ENCODE measurements at regions of chr3 and their contacts with region 1.

Region 1: DNA sequence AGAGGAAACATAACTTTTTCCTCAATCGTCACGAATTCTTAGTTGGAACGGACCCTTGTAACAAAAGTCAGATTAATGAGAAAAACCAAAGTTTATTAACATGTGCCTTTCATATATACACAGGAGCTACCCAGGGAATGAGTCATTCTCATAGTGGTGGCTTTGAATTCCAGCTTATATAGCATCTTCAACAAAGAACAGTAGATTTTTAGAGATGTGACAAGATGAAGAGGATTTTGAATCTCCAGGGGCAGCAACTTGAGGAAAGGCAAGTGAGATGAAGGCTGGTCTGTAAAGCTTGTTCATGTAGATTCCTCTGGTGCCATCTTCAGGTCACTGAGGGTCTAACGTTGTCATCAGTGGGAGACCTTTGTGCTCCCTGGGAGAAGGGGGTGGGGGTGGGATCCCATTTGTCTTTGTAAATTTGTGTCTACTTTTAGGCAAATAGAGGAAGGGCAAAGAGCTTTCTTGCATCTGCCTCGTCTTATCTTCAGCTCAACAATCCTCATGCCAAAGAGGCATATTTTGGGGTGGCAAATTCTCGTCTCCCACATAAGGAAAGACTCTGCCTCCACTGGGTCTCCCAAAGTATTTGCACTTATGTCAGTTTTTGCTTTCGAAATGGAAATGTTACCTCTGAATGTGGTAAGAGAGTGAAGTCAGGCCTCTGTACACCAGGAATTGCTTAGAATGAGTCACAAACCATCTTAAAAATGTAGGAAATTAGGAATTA is 29.5 kb downstream of the CLEC3B start:
- DNase-seq: no peak
- H3K4me3 ChIP-seq: no peak overlapping the region
- H3K27ac ChIP-seq: no peak overlapping the region
- H3K4me1 ChIP-seq: peaks cover under 1 to 6% (median 2%) of the 10 kb centered on the region in 4 experiments; a peak in 5 of 7 replicates
- H3K27me3 ChIP-seq: peaks cover 10 to 40% (median 35%) of the 10 kb centered on the region in 4 experiments
- CTCF ChIP-seq: peak; percentile 51 to 60 (median 58)
- EP300 ChIP-seq: no peak
- POLR2A ChIP-seq: no peak
- RAD21 ChIP-seq: peak; percentile 59 to 72

Region 2: DNA sequence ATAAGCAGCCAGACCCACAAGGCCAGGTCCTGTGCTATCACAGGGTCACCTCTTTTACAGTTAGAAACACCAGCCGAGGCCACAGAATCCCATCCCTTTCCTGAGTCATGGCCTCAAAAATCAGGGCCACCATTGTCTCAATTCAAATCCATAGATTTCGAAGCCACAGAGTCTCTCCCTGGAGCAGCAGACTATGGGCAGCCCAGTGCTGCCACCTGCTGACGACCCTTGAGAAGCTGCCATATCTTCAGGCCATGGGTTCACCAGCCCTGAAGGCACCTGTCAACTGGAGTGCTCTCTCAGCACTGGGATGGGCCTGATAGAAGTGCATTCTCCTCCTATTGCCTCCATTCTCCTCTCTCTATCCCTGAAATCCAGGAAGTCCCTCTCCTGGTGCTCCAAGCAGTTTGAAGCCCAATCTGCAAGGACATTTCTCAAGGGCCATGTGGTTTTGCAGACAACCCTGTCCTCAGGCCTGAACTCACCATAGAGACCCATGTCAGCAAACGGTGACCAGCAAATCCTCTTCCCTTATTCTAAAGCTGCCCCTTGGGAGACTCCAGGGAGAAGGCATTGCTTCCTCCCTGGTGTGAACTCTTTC is 141.6 kb before region 1 on chr3:
- CTCF ChIA-PET with region 1: no interaction called
- POLR2A ChIA-PET with region 1: no interaction called
- DNase-seq: peak; percentile 58 to 85
- H3K4me3 ChIP-seq: no peak overlapping the region
- H3K27ac ChIP-seq: no peak overlapping the region
- H3K4me1 ChIP-seq: peaks cover 0 to 2% (median 0%) of the 10 kb centered on the region in 4 experiments; a peak in 1 of 7 replicates
- H3K27me3 ChIP-seq: no peaks in the 10 kb centered on the region
- CTCF ChIP-seq: peak; percentile 77 to 96 (median 84)
- EP300 ChIP-seq: no peak
- POLR2A ChIP-seq: no peak
- RAD21 ChIP-seq: peak; percentile 84 to 85

Region 3: GRCh38 chr3:44966750-44967278 is 88.8 kb before region 1 on chr3:
- CTCF ChIA-PET with region 1: no interaction called
- POLR2A ChIA-PET with region 1: no interaction called
- DNase-seq: no peak
- H3K4me3 ChIP-seq: no peak overlapping the region
- H3K27ac ChIP-seq: no peak overlapping the region
- H3K4me1 ChIP-seq: no peaks in the 10 kb centered on the region
- H3K27me3 ChIP-seq: no peaks in the 10 kb centered on the region
- CTCF ChIP-seq: no peak
- EP300 ChIP-seq: no peak
- POLR2A ChIP-seq: no peak
- RAD21 ChIP-seq: no peak

Region 4: DNA sequence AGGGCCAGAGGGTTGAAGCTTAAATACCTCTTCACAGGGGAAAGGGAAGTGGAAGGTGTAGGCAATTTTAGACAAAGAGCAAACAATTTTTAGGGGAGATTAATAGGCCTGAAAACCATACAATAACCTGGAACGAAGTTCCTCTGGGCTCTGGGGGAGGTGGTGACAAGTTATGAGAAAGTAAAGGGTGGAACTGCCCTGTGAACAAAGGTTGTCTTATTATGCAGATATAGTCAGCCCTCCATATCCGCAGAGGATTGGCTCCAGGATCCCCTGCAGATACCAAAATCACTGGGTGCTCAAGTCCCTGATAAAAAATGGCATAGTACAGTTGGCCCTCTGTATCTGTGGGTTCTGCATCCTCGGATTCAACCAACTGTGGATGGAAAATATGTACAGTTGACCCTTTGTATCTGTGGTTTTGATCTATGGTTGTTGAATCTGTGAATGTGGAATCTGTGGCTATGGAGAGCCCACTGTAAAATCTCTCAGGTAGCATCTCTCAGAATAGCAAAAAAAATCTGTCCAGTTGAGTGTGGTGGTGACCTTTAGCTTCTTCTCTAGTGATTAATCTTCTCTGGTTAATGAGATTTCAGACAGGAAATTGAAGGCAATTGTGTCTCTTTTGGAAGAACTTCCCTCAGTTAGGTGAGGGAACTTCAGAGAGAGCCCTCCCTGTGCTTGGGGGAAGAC is 10.7 kb after region 1 on chr3:
- CTCF ChIA-PET with region 1: interaction called, 23 read pairs
- POLR2A ChIA-PET with region 1: no interaction called
- DNase-seq: no peak
- H3K4me3 ChIP-seq: no peak overlapping the region
- H3K27ac ChIP-seq: no peak overlapping the region
- H3K4me1 ChIP-seq: no peaks in the 10 kb centered on the region
- H3K27me3 ChIP-seq: no peaks in the 10 kb centered on the region
- CTCF ChIP-seq: no peak
- EP300 ChIP-seq: no peak
- POLR2A ChIP-seq: no peak
- RAD21 ChIP-seq: no peak